Activated naive CD4-positive, alpha-beta T cell treated with anti-CD3 and anti-CD28 coated beads for 36 hours (primary cell): ENCODE measurements at regions of chr4 and their contacts with region 1.

Region 1: GRCh38 chr4:47926639-47927258 is 12.4 kb upstream of the NFXL1 start:
- DNase-seq: peak; percentile 74
- H3K4me3 Mint-ChIP-seq: peak overlapping the region; percentile 63
- H3K27ac Mint-ChIP-seq: no peak overlapping the region
- H3K4me1 Mint-ChIP-seq: peaks cover 8% of the 10 kb centered on the region
- H3K27me3 Mint-ChIP-seq: peaks cover 11% of the 10 kb centered on the region

Region 2: DNA sequence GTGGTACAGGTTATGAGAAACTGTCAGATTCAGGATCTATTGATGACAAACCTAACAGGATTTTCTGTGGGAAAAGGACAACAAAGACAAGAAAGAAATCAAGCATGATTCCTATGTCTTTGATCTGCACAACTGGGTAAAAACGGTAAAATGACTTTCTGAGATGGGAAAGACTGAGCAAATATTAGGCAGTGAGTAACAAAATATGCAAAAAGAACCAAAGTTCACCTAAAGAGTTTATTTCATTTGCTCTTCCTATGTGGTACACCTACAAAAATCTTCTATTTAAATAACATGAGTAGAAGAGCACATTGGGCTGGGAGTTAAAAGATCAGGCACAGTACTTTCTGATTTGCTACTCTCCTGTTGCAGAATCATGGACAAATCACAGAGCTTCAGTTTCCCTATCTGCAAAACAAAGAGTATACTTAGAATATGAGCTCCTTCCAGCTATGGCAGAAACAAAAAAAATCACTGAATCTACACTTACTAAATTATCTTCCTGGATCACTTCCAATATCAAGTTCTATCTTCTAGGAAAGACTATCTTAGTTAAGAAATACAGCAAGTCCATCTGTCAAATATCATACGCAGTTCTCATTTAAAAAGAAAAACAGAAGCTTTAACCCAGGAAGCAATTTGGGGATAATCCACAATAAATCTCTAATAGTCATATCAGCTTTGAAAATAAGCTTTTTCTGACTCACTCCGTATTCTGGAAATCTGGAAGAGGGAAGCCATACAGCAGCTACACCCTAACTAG is 49.8 kb before region 1 on chr4:
- CTCF ChIA-PET with region 1: no interaction called
- intact Hi-C with region 1: no loop called
- DNase-seq: no peak
- H3K4me3 Mint-ChIP-seq: no peak overlapping the region
- H3K27ac Mint-ChIP-seq: no peak overlapping the region
- H3K4me1 Mint-ChIP-seq: peaks cover 11% of the 10 kb centered on the region
- H3K27me3 Mint-ChIP-seq: no peaks in the 10 kb centered on the region

Region 3: DNA sequence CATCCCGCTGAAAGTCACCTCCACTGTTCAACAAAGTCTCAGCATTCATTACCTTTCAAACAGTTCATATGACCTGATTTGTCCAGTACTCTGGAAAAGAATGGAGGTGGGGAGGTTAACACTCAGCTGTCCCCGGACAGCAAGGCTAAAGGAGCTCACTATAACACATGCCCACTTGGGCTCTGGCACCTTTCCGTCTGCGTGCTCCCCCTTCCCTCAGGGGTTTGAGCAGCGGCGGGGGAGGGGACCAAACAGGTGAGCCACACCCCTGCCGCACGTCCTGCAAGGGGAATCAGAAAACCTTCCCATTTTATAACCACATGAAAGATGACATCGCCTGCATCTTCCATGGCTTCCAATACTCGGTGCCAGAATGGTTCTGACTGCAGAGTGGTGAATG is 27.5 kb after region 1 on chr4:
- CTCF ChIA-PET with region 1: no interaction called
- intact Hi-C with region 1: no loop called
- DNase-seq: no peak
- H3K4me3 Mint-ChIP-seq: no peak overlapping the region
- H3K27ac Mint-ChIP-seq: no peak overlapping the region
- H3K4me1 Mint-ChIP-seq: no peaks in the 10 kb centered on the region
- H3K27me3 Mint-ChIP-seq: no peaks in the 10 kb centered on the region

Region 4: GRCh38 chr4:48042979-48043461 is 116.3 kb after region 1 on chr4:
- CTCF ChIA-PET with region 1: no interaction called
- intact Hi-C with region 1: no loop called
- DNase-seq: no peak
- H3K4me3 Mint-ChIP-seq: no peak overlapping the region
- H3K27ac Mint-ChIP-seq: no peak overlapping the region
- H3K4me1 Mint-ChIP-seq: peaks cover 79% of the 10 kb centered on the region
- H3K27me3 Mint-ChIP-seq: no peaks in the 10 kb centered on the region

Region 5: GRCh38 chr4:48275247-48275646 is 348.5 kb after region 1 on chr4:
- CTCF ChIA-PET with region 1: no interaction called
- intact Hi-C with region 1: loop called (anchors 2 kb)
- DNase-seq: peak; percentile 22
- H3K4me3 Mint-ChIP-seq: no peak overlapping the region
- H3K27ac Mint-ChIP-seq: no peak overlapping the region
- H3K4me1 Mint-ChIP-seq: peaks cover 10% of the 10 kb centered on the region
- H3K27me3 Mint-ChIP-seq: peaks cover 6% of the 10 kb centered on the region

Region 6: GRCh38 chr4:48290146-48290772 is 363.5 kb after region 1 on chr4:
- CTCF ChIA-PET with region 1: no interaction called
- intact Hi-C with region 1: loop called (anchors 5 kb)
- DNase-seq: peak; percentile 40
- H3K4me3 Mint-ChIP-seq: no peak overlapping the region
- H3K27ac Mint-ChIP-seq: no peak overlapping the region
- H3K4me1 Mint-ChIP-seq: no peaks in the 10 kb centered on the region
- H3K27me3 Mint-ChIP-seq: no peaks in the 10 kb centered on the region